Activated naive CD8-positive, alpha-beta T cell treated with anti-CD3 and anti-CD28 coated beads, Interleukin-2, amount 10 ng/mL, durations not matched to agents 7 days and 5 days (primary cell): ENCODE measurements at regions of chr22 and their contacts with region 1.

Region 1: DNA sequence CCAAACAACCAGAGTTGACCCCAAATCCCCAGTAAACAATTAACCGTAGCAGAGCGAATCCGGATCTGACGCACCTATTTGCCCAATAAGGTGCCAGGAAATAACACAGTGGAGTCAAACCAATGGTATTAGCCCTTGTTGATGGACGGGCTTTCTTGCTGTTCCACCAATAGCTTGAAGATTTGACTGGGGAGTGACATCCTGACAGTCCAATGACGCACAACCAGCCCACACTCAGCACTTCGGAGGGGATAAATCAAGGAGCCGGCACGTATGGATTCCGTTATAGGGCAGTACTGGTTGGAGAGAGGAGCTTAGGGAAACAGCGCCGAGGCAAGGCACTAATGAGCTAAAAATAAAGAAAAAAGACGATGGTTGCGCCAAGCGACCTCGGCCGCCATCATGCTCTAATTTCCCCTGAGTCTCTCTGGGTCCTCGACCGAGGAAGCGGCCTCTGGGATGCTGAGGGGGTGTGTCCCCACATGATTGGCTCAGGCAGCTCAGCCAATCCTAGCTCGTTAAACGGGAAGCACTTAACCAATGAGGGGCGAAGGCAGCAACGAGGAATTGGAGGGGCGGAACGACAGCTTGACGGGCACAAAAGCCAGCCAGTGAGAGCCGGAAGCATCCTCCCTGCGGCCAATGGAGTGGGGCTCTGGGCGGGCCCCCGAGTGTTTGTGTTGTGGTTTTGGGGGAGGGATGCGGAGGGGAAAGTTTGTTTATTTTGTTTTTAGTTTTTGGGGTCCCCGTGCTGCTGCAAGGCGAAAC is 49.5 kb downstream of the FAM83F start:
- DNase-seq: peak; percentile 96
- ATAC-seq: peak; percentile 89
- H3K4me3 Mint-ChIP-seq: peak overlapping the region; percentile 95
- H3K27ac Mint-ChIP-seq: peak overlapping the region; percentile 100
- H3K4me1 Mint-ChIP-seq: peaks cover 29% of the 10 kb centered on the region
- H3K27me3 Mint-ChIP-seq: peaks cover 7% of the 10 kb centered on the region

Region 2: DNA sequence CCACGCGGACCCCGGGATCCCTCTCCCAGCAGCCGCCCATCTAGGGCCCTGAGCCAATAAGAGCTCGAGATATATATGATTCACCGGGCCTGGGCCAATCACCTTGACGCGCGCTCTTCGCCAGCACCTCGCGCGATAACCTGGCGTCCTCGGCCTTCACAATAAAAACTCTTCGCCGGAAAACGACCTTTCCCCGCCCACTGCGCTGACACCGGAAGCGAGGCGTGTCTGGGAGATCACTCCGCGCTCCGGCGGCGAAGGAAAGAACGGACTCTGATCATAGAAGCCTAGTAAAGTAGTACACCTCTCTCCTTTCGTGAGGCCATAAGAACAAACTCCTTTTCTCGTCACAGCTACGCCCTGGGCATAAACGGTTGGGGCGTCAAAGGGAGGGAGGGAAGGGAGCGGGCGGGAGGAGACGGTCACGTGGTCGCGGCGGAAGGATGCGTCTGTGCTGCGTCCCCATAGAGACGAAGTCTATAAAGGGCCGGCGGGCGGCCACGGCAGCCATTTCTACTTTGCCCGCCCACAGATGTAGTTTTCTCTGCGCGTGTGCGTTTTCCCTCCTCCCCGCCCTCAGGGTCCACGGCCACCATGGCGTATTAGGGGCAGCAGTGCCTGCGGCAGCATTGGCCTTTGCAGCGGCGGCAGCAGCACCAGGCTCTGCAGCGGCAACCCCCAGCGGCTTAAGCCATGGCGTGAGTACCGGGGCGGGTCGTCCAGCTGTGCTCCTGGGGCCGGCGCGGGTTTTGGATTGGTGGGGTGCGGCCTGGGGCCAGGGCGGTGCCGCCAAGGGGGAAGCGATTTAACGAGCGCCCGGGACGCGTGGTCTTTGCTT is 524.0 kb before region 1 on chr22 and contains the start of gene ATF4:
- POLR2A ChIA-PET with region 1: interaction called, 15 read pairs
- DNase-seq: peak; percentile 92
- ATAC-seq: peak; percentile 94
- H3K4me3 Mint-ChIP-seq: peak within 1 kb of the TSS; percentile 96
- H3K27ac Mint-ChIP-seq: peak within 1 kb of the TSS; percentile 99
- H3K4me1 Mint-ChIP-seq: peaks cover 58% of the 10 kb centered on the region
- H3K27me3 Mint-ChIP-seq: no peaks in the 10 kb centered on the region
- total RNA-seq, gene ATF4: 413 to 424 TPM

Region 3: GRCh38 chr22:39960791-39961746 is 83.2 kb before region 1 on chr22:
- POLR2A ChIA-PET with region 1: no interaction called
- DNase-seq: peak; percentile 62
- ATAC-seq: peak; percentile 93
- H3K4me3 Mint-ChIP-seq: peak overlapping the region; percentile 80
- H3K27ac Mint-ChIP-seq: peak overlapping the region; percentile 90
- H3K4me1 Mint-ChIP-seq: peaks cover 70% of the 10 kb centered on the region
- H3K27me3 Mint-ChIP-seq: no peaks in the 10 kb centered on the region

Region 4: GRCh38 chr22:40031766-40032470 is 12.4 kb before region 1 on chr22:
- POLR2A ChIA-PET with region 1: interaction called, 16 read pairs
- DNase-seq: no peak
- ATAC-seq: no peak
- H3K4me3 Mint-ChIP-seq: no peak overlapping the region
- H3K27ac Mint-ChIP-seq: peak overlapping the region; percentile 60
- H3K4me1 Mint-ChIP-seq: peaks cover 17% of the 10 kb centered on the region
- H3K27me3 Mint-ChIP-seq: no peaks in the 10 kb centered on the region

Region 5: GRCh38 chr22:40107851-40108378 is 63.6 kb after region 1 on chr22:
- POLR2A ChIA-PET with region 1: interaction called, 21 read pairs
- DNase-seq: peak; percentile 52
- ATAC-seq: peak; percentile 88
- H3K4me3 Mint-ChIP-seq: peak overlapping the region; percentile 82
- H3K27ac Mint-ChIP-seq: peak overlapping the region; percentile 91
- H3K4me1 Mint-ChIP-seq: peaks cover 52% of the 10 kb centered on the region
- H3K27me3 Mint-ChIP-seq: no peaks in the 10 kb centered on the region

Region 6: DNA sequence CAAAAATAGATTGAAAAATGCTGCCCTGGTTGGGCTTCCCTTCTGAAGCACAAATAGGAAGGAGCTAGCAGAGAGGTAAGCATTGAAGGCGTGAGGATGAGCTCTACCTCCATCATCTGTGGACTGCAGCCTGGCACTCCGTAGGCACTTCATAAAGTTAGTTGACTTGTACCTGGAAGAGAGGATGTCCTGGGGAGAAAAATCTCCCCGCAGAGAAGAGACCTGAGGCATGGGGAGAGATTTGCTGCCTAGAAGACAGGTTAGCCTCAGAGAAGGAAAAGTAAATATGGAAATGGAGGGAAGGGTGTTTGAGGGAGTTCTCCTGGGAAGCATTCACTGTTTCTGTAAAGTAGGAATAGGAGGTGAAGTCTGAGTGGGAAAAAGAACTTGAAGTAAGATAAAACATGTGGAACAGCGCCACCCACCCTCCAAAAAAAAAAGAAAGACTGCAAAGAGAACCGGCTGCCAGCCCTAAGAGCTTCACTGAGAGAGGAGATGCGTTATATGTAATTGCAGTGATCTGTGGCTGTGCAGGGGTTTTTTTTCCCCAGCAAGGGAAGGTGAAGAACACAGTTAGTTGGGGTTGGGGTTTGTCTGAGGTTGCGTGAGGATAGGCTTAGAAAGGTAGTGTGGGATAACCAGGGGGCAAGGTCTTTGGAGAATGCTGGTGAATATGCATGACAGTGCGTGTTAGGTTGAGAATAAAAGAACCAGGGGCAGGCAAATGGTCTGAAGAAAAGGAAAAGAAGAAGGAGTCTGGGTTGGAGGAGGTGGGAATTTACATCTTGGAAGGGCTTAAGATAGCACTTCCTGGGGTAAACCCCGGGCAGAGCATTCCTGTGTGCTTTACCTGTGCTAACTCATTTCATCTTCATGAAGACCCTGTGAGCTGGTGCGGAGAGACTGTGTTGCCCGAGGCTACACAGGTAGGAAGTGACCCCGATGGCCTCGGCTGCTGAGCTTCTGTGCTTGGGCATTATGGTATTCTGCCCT is 149.4 kb after region 1 on chr22:
- POLR2A ChIA-PET with region 1: interaction called, 10 read pairs
- DNase-seq: no peak
- ATAC-seq: no peak
- H3K4me3 Mint-ChIP-seq: no peak overlapping the region
- H3K27ac Mint-ChIP-seq: peak overlapping the region; percentile 55
- H3K4me1 Mint-ChIP-seq: peaks cover 40% of the 10 kb centered on the region
- H3K27me3 Mint-ChIP-seq: no peaks in the 10 kb centered on the region

Region 7: GRCh38 chr22:40346178-40347118 is 302.2 kb after region 1 on chr22 and contains the start of gene ADSL:
- POLR2A ChIA-PET with region 1: interaction called, 74 read pairs
- DNase-seq: peak; percentile 89
- ATAC-seq: peak; percentile 89
- H3K4me3 Mint-ChIP-seq: peak within 1 kb of the TSS; percentile 96
- H3K27ac Mint-ChIP-seq: peak within 1 kb of the TSS; percentile 98
- H3K4me1 Mint-ChIP-seq: peaks cover 37% of the 10 kb centered on the region
- H3K27me3 Mint-ChIP-seq: no peaks in the 10 kb centered on the region
- total RNA-seq, gene ADSL: 83.6 to 93.9 TPM